B cell (primary cell): ENCODE measurements at regions of chr2 and their contacts with region 1.

Region 1: GRCh38 chr2:64750817-64751285 is 97.1 kb upstream of the SERTAD2 start:
- DNase-seq: peak; percentile 99
- ATAC-seq: peak; percentile 81
- H3K4me3 ChIP-seq: peak overlapping the region; percentile 75 to 99 (median 93)
- H3K4me3 Mint-ChIP-seq: peak overlapping the region; percentile 91
- H3K27ac ChIP-seq: peak overlapping the region; percentile 83 to 88
- H3K27ac Mint-ChIP-seq: peak overlapping the region; percentile 98
- H3K4me1 ChIP-seq: peaks cover 18 to 19% of the 10 kb centered on the region in 2 donors
- H3K4me1 Mint-ChIP-seq: peaks cover 28% of the 10 kb centered on the region
- H3K27me3 ChIP-seq: no peaks in the 10 kb centered on the region
- H3K27me3 Mint-ChIP-seq: no peaks in the 10 kb centered on the region
- CTCF ChIP-seq: no peak

Region 2: GRCh38 chr2:64586883-64587481 is 163.9 kb before region 1 on chr2:
- CTCF ChIA-PET with region 1: interaction called, 10 read pairs
- POLR2A ChIA-PET with region 1: interaction called, 3 read pairs
- intact Hi-C with region 1: loop called (anchors 5 kb)
- DNase-seq: peak; percentile 72
- ATAC-seq: peak; percentile 58
- H3K4me3 ChIP-seq: no peak overlapping the region
- H3K4me3 Mint-ChIP-seq: no peak overlapping the region
- H3K27ac ChIP-seq: no peak overlapping the region
- H3K27ac Mint-ChIP-seq: peak overlapping the region; percentile 32
- H3K4me1 ChIP-seq: peaks cover 0 to 4% of the 10 kb centered on the region in 2 donors
- H3K4me1 Mint-ChIP-seq: peaks cover 14% of the 10 kb centered on the region
- H3K27me3 ChIP-seq: no peaks in the 10 kb centered on the region
- H3K27me3 Mint-ChIP-seq: no peaks in the 10 kb centered on the region
- CTCF ChIP-seq: peak; percentile 88

Region 3: DNA sequence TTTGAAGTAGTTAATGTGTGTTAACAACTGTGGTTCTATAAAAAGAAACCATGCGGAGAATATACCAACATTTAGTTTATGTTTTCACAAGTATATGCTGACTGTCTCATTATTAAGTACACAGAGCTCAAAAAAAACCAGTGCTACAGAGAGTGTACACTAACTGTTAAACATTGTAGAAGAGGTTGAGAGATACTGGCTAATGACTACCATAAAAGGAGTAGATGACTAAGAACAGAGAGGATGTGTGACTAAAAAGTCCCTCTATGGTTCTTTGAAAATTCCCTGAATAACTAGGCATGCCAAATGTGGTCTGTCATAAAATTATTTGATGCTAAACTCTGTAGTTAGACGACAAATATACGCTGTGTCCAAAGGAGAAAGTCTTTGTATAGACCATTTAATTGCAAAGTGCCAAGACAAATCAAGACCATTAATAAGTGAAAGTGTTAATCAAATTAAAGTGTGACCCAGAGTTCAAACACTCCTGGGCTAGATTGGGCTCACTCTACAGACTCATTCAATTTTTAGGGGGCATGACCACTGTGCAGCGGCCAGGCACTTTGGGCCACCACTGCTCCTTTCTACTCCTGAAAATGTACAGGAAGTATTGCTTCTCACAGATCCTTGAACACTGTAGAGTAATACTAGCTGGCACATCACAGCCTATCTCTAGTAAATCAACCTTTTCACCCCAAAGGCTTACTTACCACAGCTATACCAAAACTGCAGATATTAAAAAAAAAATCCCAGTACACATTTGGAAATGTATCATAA is 52.0 kb before region 1 on chr2:
- CTCF ChIA-PET with region 1: no interaction called
- POLR2A ChIA-PET with region 1: interaction called, 10 read pairs
- intact Hi-C with region 1: loop called (anchors 2 kb)
- DNase-seq: peak; percentile 27
- ATAC-seq: peak; percentile 51
- H3K4me3 ChIP-seq: peak overlapping the region in 1 of 5 experiments; percentile 36
- H3K4me3 Mint-ChIP-seq: peak overlapping the region; percentile 37
- H3K27ac ChIP-seq: no peak overlapping the region
- H3K27ac Mint-ChIP-seq: peak overlapping the region; percentile 51
- H3K4me1 ChIP-seq: peaks cover 22 to 24% of the 10 kb centered on the region in 2 donors
- H3K4me1 Mint-ChIP-seq: peaks cover 40% of the 10 kb centered on the region
- H3K27me3 ChIP-seq: no peaks in the 10 kb centered on the region
- H3K27me3 Mint-ChIP-seq: no peaks in the 10 kb centered on the region
- CTCF ChIP-seq: no peak

Region 4: GRCh38 chr2:64730551-64731262 is 20.1 kb before region 1 on chr2:
- CTCF ChIA-PET with region 1: interaction called, 7 read pairs
- POLR2A ChIA-PET with region 1: interaction called, 38 read pairs
- intact Hi-C with region 1: loop called (anchors 1 kb)
- DNase-seq: peak; percentile 70
- ATAC-seq: peak; percentile 47
- H3K4me3 ChIP-seq: peak overlapping the region; percentile 43 to 81 (median 61)
- H3K4me3 Mint-ChIP-seq: peak overlapping the region; percentile 87
- H3K27ac ChIP-seq: peak overlapping the region; percentile 84
- H3K27ac Mint-ChIP-seq: peak overlapping the region; percentile 97
- H3K4me1 ChIP-seq: peaks cover 50% of the 10 kb centered on the region in 2 donors
- H3K4me1 Mint-ChIP-seq: peaks cover 57% of the 10 kb centered on the region
- H3K27me3 ChIP-seq: no peaks in the 10 kb centered on the region
- H3K27me3 Mint-ChIP-seq: no peaks in the 10 kb centered on the region
- CTCF ChIP-seq: no peak

Region 5: DNA sequence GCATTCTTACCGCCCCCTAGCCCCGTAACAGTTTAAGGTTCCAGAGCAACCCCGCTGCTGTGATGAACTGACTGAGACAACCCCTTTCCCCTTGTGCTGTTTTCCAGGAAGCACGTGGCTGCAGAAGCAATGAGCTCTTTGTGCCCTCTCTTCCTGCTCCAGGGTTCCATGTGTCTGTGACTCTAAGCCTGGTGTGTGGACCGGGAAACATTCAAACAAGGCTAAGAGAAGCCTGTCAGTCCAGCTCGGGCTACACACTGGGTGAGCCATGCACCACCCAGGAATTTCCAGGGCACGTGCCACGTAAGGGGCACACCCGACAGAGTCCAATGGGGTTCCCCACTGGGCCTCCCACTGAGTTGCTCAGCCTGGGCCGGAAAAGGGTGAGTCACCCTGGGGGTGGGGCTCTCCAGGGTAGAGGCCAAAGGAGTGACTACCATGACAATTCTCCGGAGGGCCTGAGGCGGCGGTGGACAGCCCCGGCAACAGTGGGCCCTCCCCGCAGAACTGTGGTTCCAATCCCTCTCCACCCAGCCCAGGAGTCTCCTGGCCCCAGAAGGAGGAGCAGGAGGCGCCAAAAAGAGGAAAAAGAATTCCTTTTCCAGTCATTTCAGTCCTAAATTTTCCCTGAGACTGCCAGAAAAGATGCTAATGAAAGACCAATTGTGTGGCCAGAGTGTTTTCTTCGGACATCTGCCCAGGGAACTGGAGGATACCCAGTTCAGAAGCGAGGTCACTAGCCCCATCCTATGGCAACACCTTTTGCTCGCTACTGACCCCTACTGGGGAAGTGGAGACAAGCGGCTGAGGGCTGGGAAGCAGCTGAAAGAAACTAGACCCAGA is 80.5 kb after region 1 on chr2:
- CTCF ChIA-PET with region 1: interaction called, 13 read pairs
- POLR2A ChIA-PET with region 1: interaction called, 3 read pairs
- intact Hi-C with region 1: loop called (anchors 1 kb)
- DNase-seq: peak; percentile 82
- ATAC-seq: peak; percentile 91
- H3K4me3 ChIP-seq: peak overlapping the region in 3 of 5 experiments; percentile 11 to 38 (median 16)
- H3K4me3 Mint-ChIP-seq: peak overlapping the region; percentile 63
- H3K27ac ChIP-seq: no peak overlapping the region
- H3K27ac Mint-ChIP-seq: peak overlapping the region; percentile 77
- H3K4me1 ChIP-seq: peaks cover 8 to 12% of the 10 kb centered on the region in 2 donors
- H3K4me1 Mint-ChIP-seq: peaks cover 13% of the 10 kb centered on the region
- H3K27me3 ChIP-seq: no peaks in the 10 kb centered on the region
- H3K27me3 Mint-ChIP-seq: no peaks in the 10 kb centered on the region
- CTCF ChIP-seq: peak; percentile 96

Region 6: DNA sequence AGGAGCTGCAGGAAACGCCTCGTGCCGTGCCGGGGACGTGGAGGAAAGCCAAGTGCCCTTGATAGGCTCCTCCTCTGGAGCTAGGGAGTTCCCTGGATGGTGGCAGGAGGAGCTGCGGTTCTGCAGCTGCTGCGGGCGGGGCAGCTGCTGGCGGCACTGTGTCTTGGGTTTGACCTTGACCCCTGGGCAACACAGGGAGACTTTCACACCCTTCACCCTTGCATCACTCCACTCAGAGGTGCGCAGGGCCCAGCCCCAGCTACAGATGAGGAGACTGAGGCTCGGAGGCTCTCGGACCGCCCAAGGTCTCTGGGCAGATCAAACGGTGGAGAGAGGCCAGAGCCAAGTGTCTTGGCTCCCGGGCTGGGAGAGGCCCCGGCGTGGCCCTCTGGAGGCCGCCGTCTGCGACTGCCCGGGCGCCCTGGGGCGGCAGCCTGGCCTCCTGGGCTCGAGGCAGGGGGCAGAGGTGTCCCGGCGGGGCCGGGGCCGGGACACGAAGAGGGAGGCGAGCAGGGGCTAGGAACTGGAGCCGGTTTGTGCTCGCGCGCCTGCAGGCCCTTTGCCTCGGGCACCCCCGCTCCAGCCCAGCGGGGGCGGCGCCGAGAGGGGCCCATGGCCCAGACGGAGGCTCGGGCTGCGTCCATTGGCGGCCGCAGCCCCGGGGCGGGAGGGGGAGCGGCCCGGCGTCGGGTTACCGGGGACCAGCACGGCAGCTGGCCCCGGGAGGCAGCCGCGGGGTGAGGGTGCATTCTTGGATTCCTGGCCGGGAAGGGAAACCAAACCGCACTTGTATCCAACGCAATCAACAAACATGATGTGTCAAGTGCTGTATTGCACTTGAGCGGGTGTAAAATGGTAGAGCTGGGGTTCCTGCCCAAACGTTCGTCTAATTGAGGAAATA is 108.7 kb after region 1 on chr2:
- CTCF ChIA-PET with region 1: interaction called, 36 read pairs
- POLR2A ChIA-PET with region 1: interaction called, 24 read pairs
- intact Hi-C with region 1: loop called (anchors 1 kb)
- DNase-seq: peak; percentile 69
- ATAC-seq: peak; percentile 11
- H3K4me3 ChIP-seq: peak overlapping the region; percentile 61 to 79 (median 67)
- H3K4me3 Mint-ChIP-seq: peak overlapping the region; percentile 79
- H3K27ac ChIP-seq: peak overlapping the region; percentile 91 to 93
- H3K27ac Mint-ChIP-seq: no peak overlapping the region
- H3K4me1 ChIP-seq: peaks cover 76 to 80% of the 10 kb centered on the region in 2 donors
- H3K4me1 Mint-ChIP-seq: peaks cover 28% of the 10 kb centered on the region
- H3K27me3 ChIP-seq: no peaks in the 10 kb centered on the region
- H3K27me3 Mint-ChIP-seq: no peaks in the 10 kb centered on the region
- CTCF ChIP-seq: no peak

Region 7: DNA sequence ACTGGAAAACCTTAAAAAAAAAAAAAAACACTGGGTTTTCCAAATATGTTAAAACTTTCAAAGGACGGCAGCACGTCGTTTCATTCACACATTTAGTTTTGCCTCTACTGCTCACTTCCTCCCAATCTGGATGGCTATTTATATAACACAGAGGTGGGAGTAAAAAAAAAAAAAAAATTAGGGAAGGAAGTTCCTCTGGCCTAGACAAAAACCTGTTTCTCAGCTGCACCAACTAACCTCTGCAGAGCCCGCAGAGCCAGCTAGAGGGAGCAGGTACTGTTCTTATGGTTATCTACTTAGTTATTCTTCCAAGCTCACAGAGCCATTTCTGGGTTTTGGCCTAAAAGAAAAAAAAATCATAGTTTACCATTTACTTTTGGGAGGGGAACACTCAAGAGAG is 266.5 kb after region 1 on chr2:
- CTCF ChIA-PET with region 1: no interaction called
- POLR2A ChIA-PET with region 1: no interaction called
- intact Hi-C with region 1: no loop called
- DNase-seq: peak; percentile 73
- ATAC-seq: peak; percentile 82
- H3K4me3 ChIP-seq: no peak overlapping the region
- H3K4me3 Mint-ChIP-seq: peak overlapping the region; percentile 55
- H3K27ac ChIP-seq: no peak overlapping the region
- H3K27ac Mint-ChIP-seq: peak overlapping the region; percentile 72
- H3K4me1 ChIP-seq: peaks cover 29 to 35% of the 10 kb centered on the region in 2 donors
- H3K4me1 Mint-ChIP-seq: peaks cover 48% of the 10 kb centered on the region
- H3K27me3 ChIP-seq: no peaks in the 10 kb centered on the region
- H3K27me3 Mint-ChIP-seq: no peaks in the 10 kb centered on the region
- CTCF ChIP-seq: peak; percentile 69

Region 8: GRCh38 chr2:65329525-65329924 is 578.7 kb after region 1 on chr2:
- CTCF ChIA-PET with region 1: no interaction called
- POLR2A ChIA-PET with region 1: no interaction called
- intact Hi-C with region 1: no loop called
- DNase-seq: no peak
- ATAC-seq: no peak
- H3K4me3 ChIP-seq: no peak overlapping the region
- H3K4me3 Mint-ChIP-seq: no peak overlapping the region
- H3K27ac ChIP-seq: no peak overlapping the region
- H3K27ac Mint-ChIP-seq: no peak overlapping the region
- H3K4me1 ChIP-seq: no peaks in the 10 kb centered on the region
- H3K4me1 Mint-ChIP-seq: no peaks in the 10 kb centered on the region
- H3K27me3 ChIP-seq: no peaks in the 10 kb centered on the region
- H3K27me3 Mint-ChIP-seq: peaks cover 5% of the 10 kb centered on the region
- CTCF ChIP-seq: no peak